B cell (primary cell): ENCODE measurements at regions of chr13 and their contacts with region 1.

Region 1: GRCh38 chr13:112942689-112943308 is 26.2 kb upstream of the MCF2L start:
- DNase-seq: peak; percentile 93
- ATAC-seq: peak; percentile 99
- H3K4me3 ChIP-seq: peak overlapping the region in 4 of 5 experiments; percentile 24 to 61 (median 53)
- H3K4me3 Mint-ChIP-seq: peak overlapping the region; percentile 99
- H3K27ac ChIP-seq: no peak overlapping the region
- H3K27ac Mint-ChIP-seq: peak overlapping the region; percentile 75
- H3K4me1 ChIP-seq: peaks cover 12 to 14% of the 10 kb centered on the region in 2 donors
- H3K4me1 Mint-ChIP-seq: peaks cover 4% of the 10 kb centered on the region
- H3K27me3 ChIP-seq: peaks cover 0 to 32% (median 7%) of the 10 kb centered on the region in 4 experiments
- H3K27me3 Mint-ChIP-seq: peaks cover 25% of the 10 kb centered on the region
- CTCF ChIP-seq: peak; percentile 98

Region 2: DNA sequence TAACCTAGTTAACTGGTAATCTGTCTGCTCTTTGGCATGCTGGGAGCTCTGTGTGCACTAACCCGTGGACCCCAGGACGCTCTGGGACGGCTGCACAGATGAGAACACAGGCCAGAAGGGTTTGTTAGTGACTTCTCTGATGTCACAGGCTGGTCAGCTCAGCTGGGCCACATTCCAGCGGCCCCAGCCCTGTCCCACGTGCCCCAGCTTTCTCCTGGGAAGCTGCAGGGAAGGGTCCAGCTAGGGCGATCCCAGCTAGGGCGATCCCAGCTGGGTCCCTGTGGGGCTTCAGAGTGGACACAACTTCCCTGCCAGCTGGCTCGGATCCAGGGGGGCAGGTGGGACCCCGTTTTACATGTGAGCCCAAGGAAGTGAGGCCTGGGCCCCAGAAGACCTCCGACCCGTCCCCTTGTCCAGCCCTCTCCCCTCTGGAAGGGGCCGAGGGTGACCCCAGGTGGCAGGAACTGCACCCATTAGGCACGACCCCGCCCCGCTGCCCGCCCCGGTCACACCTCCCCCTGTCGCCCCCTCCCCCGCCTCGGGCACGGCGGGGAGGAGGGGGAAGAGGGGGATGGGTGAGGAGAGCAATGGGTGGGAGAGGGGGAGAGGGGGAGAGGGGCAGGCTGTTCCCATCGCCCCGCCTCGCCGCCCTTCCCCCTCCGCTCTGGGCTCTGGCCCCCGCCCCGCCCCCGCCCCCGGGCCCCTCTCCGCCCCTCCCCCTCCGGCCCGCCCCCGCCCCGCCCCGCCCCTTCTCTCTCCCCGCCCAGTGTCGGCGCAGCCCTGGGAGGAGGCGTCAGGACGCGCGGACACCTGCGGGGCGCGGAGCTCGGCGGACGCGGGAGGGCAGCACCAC is 49.0 kb before region 1 on chr13:
- CTCF ChIA-PET with region 1: no interaction called
- POLR2A ChIA-PET with region 1: no interaction called
- intact Hi-C with region 1: loop called (anchors 1 kb)
- DNase-seq: peak; percentile 70
- ATAC-seq: peak; percentile 79
- H3K4me3 ChIP-seq: peak overlapping the region in 4 of 5 experiments; percentile 26 to 63 (median 58)
- H3K4me3 Mint-ChIP-seq: peak overlapping the region; percentile 60
- H3K27ac ChIP-seq: peak overlapping the region; percentile 28 to 59
- H3K27ac Mint-ChIP-seq: peak overlapping the region; percentile 56
- H3K4me1 ChIP-seq: peaks cover 27 to 33% of the 10 kb centered on the region in 2 donors
- H3K4me1 Mint-ChIP-seq: peaks cover 25% of the 10 kb centered on the region
- H3K27me3 ChIP-seq: peaks cover 0 to 7% (median 0%) of the 10 kb centered on the region in 4 experiments
- H3K27me3 Mint-ChIP-seq: no peaks in the 10 kb centered on the region
- CTCF ChIP-seq: no peak

Region 3: GRCh38 chr13:112968908-112969691 is 26.3 kb after region 1 on chr13 and contains the start of gene MCF2L:
- CTCF ChIA-PET with region 1: interaction called, 5 read pairs
- POLR2A ChIA-PET with region 1: no interaction called
- intact Hi-C with region 1: loop called (anchors 2 kb)
- DNase-seq: peak; percentile 69
- ATAC-seq: peak; percentile 54
- H3K4me3 ChIP-seq: peak within 1 kb of the TSS; percentile 17 to 70 (median 58)
- H3K4me3 Mint-ChIP-seq: peak within 1 kb of the TSS; percentile 91
- H3K27ac ChIP-seq: peak within 1 kb of the TSS in 1 of 2 donors; percentile 44
- H3K27ac Mint-ChIP-seq: peak within 1 kb of the TSS; percentile 46
- H3K4me1 ChIP-seq: peaks cover 12 to 13% of the 10 kb centered on the region in 2 donors
- H3K4me1 Mint-ChIP-seq: peaks cover 12% of the 10 kb centered on the region
- H3K27me3 ChIP-seq: peaks cover 0 to 14% (median 2%) of the 10 kb centered on the region in 4 experiments
- H3K27me3 Mint-ChIP-seq: peaks cover 23% of the 10 kb centered on the region
- CTCF ChIP-seq: no peak
- total RNA-seq, gene MCF2L: 7.7 and 8.2 TPM in 2 replicates

Region 4: GRCh38 chr13:113029487-113030258 is 86.9 kb after region 1 on chr13:
- CTCF ChIA-PET with region 1: interaction called, 33 read pairs
- POLR2A ChIA-PET with region 1: no interaction called
- intact Hi-C with region 1: no loop called
- DNase-seq: peak; percentile 48
- ATAC-seq: no peak
- H3K4me3 ChIP-seq: no peak overlapping the region
- H3K4me3 Mint-ChIP-seq: no peak overlapping the region
- H3K27ac ChIP-seq: no peak overlapping the region
- H3K27ac Mint-ChIP-seq: no peak overlapping the region
- H3K4me1 ChIP-seq: peaks cover 0 to 2% of the 10 kb centered on the region in 2 donors
- H3K4me1 Mint-ChIP-seq: no peaks in the 10 kb centered on the region
- H3K27me3 ChIP-seq: peaks cover 0 to 3% (median 0%) of the 10 kb centered on the region in 4 experiments
- H3K27me3 Mint-ChIP-seq: no peaks in the 10 kb centered on the region
- CTCF ChIP-seq: peak; percentile 75

Region 5: GRCh38 chr13:113153810-113154748 is 211.3 kb after region 1 on chr13:
- CTCF ChIA-PET with region 1: no interaction called
- POLR2A ChIA-PET with region 1: no interaction called
- intact Hi-C with region 1: loop called (anchors 2 kb)
- DNase-seq: peak; percentile 80
- ATAC-seq: peak; percentile 88
- H3K4me3 ChIP-seq: peak overlapping the region; percentile 40 to 77 (median 52)
- H3K4me3 Mint-ChIP-seq: peak overlapping the region; percentile 81
- H3K27ac ChIP-seq: peak overlapping the region; percentile 6 to 48
- H3K27ac Mint-ChIP-seq: peak overlapping the region; percentile 71
- H3K4me1 ChIP-seq: peaks cover 22 to 25% of the 10 kb centered on the region in 2 donors
- H3K4me1 Mint-ChIP-seq: peaks cover 19% of the 10 kb centered on the region
- H3K27me3 ChIP-seq: peaks cover 0 to 46% (median 11%) of the 10 kb centered on the region in 4 experiments
- H3K27me3 Mint-ChIP-seq: peaks cover 9% of the 10 kb centered on the region
- CTCF ChIP-seq: no peak

Region 6: DNA sequence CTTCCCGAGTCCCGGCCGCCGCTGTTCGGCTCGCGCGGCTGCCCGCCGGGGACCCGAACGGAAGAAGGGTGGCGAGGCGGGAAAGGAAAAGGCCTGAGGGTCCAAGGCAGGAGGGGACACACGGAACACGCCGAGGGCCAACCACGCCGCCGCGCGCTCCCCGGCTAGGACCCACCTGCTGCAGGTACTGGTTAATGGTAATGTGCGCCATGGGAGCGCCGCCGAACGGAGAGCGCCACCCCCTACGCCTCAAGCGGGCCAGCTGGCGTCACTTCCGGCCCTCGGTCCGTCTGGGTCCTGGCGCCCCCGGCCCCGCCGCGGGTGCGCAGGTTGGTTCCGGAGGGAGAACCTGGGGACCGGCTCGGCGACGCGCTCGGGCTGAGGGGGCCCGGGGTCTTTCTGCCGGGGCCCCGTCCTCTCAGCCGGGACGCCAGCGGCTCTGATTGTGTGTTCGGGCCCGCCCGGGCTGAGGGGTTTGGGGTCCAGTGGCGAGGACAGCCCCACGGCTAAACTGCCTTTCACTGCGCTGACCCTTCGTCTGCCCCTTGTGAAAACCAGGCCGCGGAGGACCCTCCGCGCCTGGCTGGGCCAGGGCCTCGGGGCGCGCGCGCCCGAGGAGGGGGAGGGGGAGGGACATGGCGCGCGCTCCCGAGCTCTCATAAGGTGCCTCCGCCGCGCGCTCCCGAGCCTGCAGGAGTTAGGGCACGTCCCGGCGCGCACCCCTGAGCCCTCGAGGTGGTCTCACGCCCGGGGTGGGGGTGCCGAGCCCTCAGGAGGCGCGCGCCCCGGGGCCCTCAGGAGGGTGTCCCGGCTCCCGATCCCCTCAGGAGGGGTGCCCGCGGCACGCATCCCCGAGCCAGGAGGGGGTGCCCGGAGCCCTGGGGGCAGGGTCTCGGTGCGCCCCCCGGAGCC is 265.9 kb after region 1 on chr13 and contains the start of gene PCID2:
- CTCF ChIA-PET with region 1: no interaction called
- POLR2A ChIA-PET with region 1: no interaction called
- intact Hi-C with region 1: loop called (anchors 2 kb)
- DNase-seq: peak; percentile 95
- ATAC-seq: peak; percentile 69
- H3K4me3 ChIP-seq: peak within 1 kb of the TSS; percentile 68 to 88 (median 74)
- H3K4me3 Mint-ChIP-seq: peak within 1 kb of the TSS; percentile 88
- H3K27ac ChIP-seq: peak within 1 kb of the TSS; percentile 95 to 97
- H3K27ac Mint-ChIP-seq: peak within 1 kb of the TSS; percentile 91
- H3K4me1 ChIP-seq: peaks cover 15 to 24% of the 10 kb centered on the region in 2 donors
- H3K4me1 Mint-ChIP-seq: peaks cover 53% of the 10 kb centered on the region
- H3K27me3 ChIP-seq: no peaks in the 10 kb centered on the region
- H3K27me3 Mint-ChIP-seq: no peaks in the 10 kb centered on the region
- CTCF ChIP-seq: no peak
- total RNA-seq, gene PCID2: 54.1 and 61.1 TPM in 2 replicates

Region 7: DNA sequence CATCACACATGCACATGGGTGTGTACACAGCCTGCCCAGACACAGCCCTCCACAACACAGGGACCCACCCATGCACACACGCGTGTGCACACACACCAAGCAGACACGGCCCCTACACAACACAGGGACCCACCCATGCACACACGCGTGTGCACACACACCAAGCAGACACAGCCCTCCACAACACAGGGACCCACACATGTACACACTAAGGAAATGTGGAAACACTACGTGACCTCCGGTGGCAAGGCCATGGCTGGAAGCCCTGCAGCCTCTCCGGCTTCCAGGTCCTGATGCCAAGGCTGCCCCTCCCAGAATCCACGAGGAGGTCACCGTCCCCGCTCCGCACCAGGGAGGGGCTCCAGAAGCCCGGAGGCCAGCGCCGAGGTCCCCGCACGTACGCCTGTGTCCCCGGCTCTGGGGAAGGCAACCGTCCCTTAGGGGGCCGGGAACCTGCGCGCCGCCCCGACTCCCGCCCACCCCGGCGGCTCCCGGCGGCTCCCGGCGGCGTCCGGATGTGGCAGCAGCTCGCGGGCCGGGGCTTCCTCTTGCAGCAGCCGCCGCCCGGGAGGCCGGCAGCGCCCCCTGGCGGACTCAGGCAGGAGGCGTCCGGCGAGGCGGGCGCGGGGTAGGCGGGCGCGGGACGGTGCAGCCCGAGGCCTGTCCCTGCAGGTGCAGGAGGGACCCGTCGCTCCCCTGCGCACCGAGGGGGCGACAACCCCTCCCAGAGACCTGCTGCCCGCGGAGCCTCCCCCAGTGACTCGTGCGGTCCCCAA is 451.0 kb after region 1 on chr13:
- CTCF ChIA-PET with region 1: interaction called, 20 read pairs
- POLR2A ChIA-PET with region 1: interaction called, 3 read pairs
- intact Hi-C with region 1: no loop called
- DNase-seq: peak; percentile 85
- ATAC-seq: peak; percentile 96
- H3K4me3 ChIP-seq: peak overlapping the region; percentile 56 to 78 (median 59)
- H3K4me3 Mint-ChIP-seq: peak overlapping the region; percentile 94
- H3K27ac ChIP-seq: peak overlapping the region in 1 of 2 donors; percentile 41
- H3K27ac Mint-ChIP-seq: peak overlapping the region; percentile 67
- H3K4me1 ChIP-seq: peaks cover 8 to 12% of the 10 kb centered on the region in 2 donors
- H3K4me1 Mint-ChIP-seq: peaks cover 4% of the 10 kb centered on the region
- H3K27me3 ChIP-seq: no peaks in the 10 kb centered on the region
- H3K27me3 Mint-ChIP-seq: no peaks in the 10 kb centered on the region
- CTCF ChIP-seq: peak; percentile 84

Region 8: DNA sequence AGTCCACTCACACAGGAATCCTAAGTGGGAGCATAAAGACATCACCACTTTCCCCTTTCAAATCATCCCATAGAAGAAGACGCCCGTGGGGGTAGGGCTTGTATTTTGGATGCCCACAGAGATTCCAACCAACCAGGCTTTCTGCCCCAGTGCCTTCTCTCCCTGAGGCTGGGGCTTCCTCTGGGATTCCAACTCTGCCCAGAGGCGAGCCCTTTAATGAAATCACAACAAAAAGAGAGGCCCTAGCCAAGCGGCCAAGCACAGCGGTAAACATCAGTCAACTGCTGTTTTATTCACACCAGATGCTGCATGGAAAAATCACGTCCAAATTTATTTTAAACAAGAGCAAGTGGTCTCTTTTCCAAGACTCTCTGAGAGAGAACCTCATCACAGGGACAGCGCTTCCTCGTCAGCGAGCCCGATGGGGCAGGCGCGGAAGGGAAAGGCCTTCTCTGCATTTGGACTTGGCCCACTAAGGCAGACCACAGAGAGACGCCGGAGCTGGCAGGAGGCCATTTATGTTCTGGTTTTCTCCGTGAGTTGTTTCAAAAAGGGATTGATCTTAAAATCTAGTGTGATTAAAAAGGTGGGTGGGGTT is 479.0 kb after region 1 on chr13:
- CTCF ChIA-PET with region 1: no interaction called
- POLR2A ChIA-PET with region 1: no interaction called
- intact Hi-C with region 1: no loop called
- DNase-seq: no peak
- ATAC-seq: no peak
- H3K4me3 ChIP-seq: no peak overlapping the region
- H3K4me3 Mint-ChIP-seq: no peak overlapping the region
- H3K27ac ChIP-seq: no peak overlapping the region
- H3K27ac Mint-ChIP-seq: no peak overlapping the region
- H3K4me1 ChIP-seq: peaks cover 0 to 10% of the 10 kb centered on the region in 2 donors
- H3K4me1 Mint-ChIP-seq: peaks cover 1% of the 10 kb centered on the region
- H3K27me3 ChIP-seq: no peaks in the 10 kb centered on the region
- H3K27me3 Mint-ChIP-seq: peaks cover 1% of the 10 kb centered on the region
- CTCF ChIP-seq: no peak